Activated B cell treated with CpG ODN at 0.5 μM for 24 hours (primary cell): ENCODE measurements at regions of chr6 and their contacts with region 1.

Region 1: DNA sequence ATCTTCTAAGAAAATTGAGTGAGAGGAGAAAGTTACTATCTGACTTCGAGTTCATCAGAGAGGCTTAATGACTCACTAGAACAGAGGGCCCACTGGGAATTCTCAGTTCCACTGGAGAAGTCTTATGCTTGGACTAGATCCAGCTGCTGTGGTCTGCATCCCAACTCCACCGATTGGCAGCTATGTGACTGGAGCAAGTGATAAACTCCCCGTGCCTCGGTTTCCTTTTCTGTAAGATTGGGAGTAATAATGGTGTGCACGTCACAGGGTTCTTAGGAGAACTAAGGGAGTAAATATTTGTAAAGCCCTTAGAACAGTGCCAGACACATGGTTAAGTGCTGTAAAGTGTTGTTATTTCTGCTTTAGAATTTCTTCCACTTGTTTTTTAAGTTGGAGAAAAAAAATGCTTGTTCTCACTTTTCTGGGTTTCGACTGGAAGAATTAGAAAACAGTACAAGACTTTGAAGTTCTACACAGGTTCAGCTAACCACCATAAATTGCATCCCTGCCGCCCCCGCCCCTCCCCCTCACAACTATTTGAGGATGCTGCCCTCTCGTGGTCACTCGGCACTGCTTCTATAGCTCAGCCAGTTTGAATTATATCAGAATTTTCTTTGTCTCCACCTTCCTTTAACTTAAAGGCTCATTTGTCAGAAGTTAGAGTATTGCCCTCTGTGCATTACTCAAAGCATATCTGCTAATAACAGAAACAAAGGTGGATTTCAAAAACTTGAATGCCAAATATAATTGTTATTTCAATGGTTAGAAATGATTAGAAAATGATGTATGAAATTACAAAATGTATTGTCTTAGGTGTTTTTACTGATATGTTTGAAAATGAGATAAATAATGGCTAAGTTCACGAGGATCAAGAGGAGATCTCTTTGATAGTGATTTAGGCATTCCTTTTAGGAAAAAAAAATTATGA is 95.0 kb upstream of the IFNGR1 start:
- DNase-seq: peak; percentile 31
- ATAC-seq: peak; percentile 90
- H3K4me3 Mint-ChIP-seq: no peak overlapping the region
- H3K27ac Mint-ChIP-seq: no peak overlapping the region
- H3K4me1 Mint-ChIP-seq: peaks cover 30% of the 10 kb centered on the region
- H3K27me3 Mint-ChIP-seq: no peaks in the 10 kb centered on the region
- CTCF ChIP-seq: peak; percentile 66

Region 2: DNA sequence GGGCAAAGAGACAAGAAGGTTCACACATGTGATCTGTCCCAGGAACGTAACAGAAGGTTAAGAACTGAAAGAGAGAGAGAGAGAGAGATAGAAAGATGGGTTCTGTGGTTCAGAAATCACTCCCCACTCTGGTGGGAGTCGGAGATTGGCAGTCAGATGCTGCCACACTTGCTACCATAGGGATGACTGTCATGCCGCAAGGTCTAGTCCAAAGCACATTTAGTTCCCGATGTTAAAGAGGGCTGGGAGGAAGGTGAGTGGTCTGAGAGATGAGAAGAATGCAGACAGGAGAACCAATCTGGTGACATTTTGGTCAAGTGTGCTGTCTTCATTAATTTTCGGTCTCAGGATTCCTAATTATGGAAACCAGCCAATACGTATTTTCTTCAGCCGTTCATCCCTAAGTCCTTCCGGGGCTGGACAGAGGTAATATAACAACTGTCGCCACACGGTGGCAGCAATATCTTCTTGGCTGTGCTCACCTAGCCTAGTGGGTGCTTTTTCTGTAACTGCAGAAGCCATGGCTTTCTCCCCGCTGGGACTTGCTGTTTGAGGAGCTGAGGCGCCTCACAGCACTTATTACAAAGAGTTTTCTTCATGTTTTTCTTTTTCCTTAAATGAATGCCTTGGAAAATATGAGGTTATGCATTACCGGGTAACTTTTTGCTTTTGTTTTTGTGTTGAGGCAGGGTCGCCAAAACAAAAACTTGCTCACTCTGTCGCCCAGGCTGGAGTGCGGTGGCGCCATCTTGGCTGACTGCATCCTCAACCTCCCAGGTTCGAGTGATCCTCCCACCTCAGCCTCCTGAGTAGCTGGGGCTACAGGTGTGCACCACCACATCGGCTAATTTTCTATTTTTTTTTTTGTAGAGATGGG is 346.1 kb before region 1 on chr6:
- CTCF ChIA-PET with region 1: interaction called, 4 read pairs
- POLR2A ChIA-PET with region 1: no interaction called
- intact Hi-C with region 1: loop called (anchors 1 kb)
- DNase-seq: peak; percentile 39
- ATAC-seq: peak; percentile 93
- H3K4me3 Mint-ChIP-seq: no peak overlapping the region
- H3K27ac Mint-ChIP-seq: no peak overlapping the region
- H3K4me1 Mint-ChIP-seq: peaks cover 4% of the 10 kb centered on the region
- H3K27me3 Mint-ChIP-seq: peaks cover 12% of the 10 kb centered on the region
- CTCF ChIP-seq: peak; percentile 22

Region 3: GRCh38 chr6:137155830-137156229 is 158.4 kb before region 1 on chr6:
- CTCF ChIA-PET with region 1: interaction called, 6 read pairs
- POLR2A ChIA-PET with region 1: no interaction called
- intact Hi-C with region 1: loop called (anchors 1 kb)
- DNase-seq: no peak
- ATAC-seq: peak; percentile 75
- H3K4me3 Mint-ChIP-seq: peak overlapping the region; percentile 52
- H3K27ac Mint-ChIP-seq: peak overlapping the region; percentile 59
- H3K4me1 Mint-ChIP-seq: peaks cover 21% of the 10 kb centered on the region
- H3K27me3 Mint-ChIP-seq: no peaks in the 10 kb centered on the region
- CTCF ChIP-seq: no peak

Region 4: DNA sequence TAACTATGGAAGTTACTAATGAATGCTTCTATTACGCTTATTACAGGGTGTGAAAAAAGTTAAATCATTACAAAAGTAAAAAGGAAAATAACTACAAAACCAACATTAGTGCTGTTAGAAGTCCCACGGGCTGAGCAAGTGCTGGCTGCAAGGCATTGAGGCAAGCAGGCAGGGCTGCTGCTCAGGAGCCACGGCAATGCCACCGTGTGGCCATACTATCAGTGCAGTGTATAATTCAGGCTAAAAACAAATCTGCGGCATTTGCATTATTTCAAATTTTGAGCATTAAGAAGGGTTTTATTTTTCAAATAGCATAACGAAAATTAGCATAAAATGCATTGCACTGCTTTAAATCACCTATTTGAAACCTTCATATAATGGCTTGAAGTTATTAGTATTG is 112.1 kb before region 1 on chr6:
- CTCF ChIA-PET with region 1: interaction called, 7 read pairs
- POLR2A ChIA-PET with region 1: no interaction called
- intact Hi-C with region 1: loop called (anchors 1 kb)
- DNase-seq: no peak
- ATAC-seq: peak; percentile 89
- H3K4me3 Mint-ChIP-seq: peak overlapping the region; percentile 24
- H3K27ac Mint-ChIP-seq: peak overlapping the region; percentile 65
- H3K4me1 Mint-ChIP-seq: peaks cover 37% of the 10 kb centered on the region
- H3K27me3 Mint-ChIP-seq: no peaks in the 10 kb centered on the region
- CTCF ChIP-seq: no peak

Region 5: DNA sequence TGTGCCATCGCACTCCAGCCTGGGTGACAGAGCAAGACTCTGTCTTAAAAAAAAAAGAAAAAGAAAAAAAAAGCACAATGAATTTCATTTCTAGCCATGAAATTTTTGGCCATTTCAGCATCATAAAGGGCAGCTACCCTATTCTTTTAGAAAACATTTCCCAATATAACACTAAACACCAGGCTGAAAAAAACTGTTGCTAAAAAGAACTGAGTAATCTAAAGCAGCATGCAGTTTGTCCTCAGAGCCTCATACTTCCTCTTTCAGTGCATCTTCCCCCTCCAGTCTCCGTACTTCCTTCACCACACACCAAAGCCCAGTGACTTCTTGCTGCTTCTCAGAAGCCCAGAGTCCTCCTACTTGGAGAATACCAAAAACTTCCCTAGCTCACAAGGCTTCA is 89.4 kb before region 1 on chr6:
- CTCF ChIA-PET with region 1: interaction called, 11 read pairs
- POLR2A ChIA-PET with region 1: interaction called, 4 read pairs
- intact Hi-C with region 1: no loop called
- DNase-seq: no peak
- ATAC-seq: peak; percentile 85
- H3K4me3 Mint-ChIP-seq: peak overlapping the region; percentile 35
- H3K27ac Mint-ChIP-seq: peak overlapping the region; percentile 85
- H3K4me1 Mint-ChIP-seq: peaks cover 71% of the 10 kb centered on the region
- H3K27me3 Mint-ChIP-seq: no peaks in the 10 kb centered on the region
- CTCF ChIP-seq: no peak

Region 6: GRCh38 chr6:137291441-137291840 is 22.8 kb before region 1 on chr6:
- CTCF ChIA-PET with region 1: interaction called, 11 read pairs
- POLR2A ChIA-PET with region 1: no interaction called
- intact Hi-C with region 1: no loop called
- DNase-seq: no peak
- ATAC-seq: no peak
- H3K4me3 Mint-ChIP-seq: no peak overlapping the region
- H3K27ac Mint-ChIP-seq: no peak overlapping the region
- H3K4me1 Mint-ChIP-seq: peaks cover 11% of the 10 kb centered on the region
- H3K27me3 Mint-ChIP-seq: no peaks in the 10 kb centered on the region
- CTCF ChIP-seq: no peak